ENCODE measurements at regions of chr18 and their contacts with region 1.

Region 1: GRCh38 chr18:45571714-45572113 is 43.6 kb upstream of the SLC14A2 start:
- DNase-seq: no peak
- H3K4me3 ChIP-seq: no peak overlapping the region
- H3K27ac ChIP-seq: no peak overlapping the region
- H3K4me1 ChIP-seq: peaks cover 0 to 16% (median 4%) of the 10 kb centered on the region in 4 experiments; a peak in 4 of 7 replicates
- H3K27me3 ChIP-seq: no peaks in the 10 kb centered on the region; a peak in 1 of 7 replicates
- CTCF ChIP-seq: peak; percentile 28 to 49 (median 35)
- EP300 ChIP-seq: no peak
- POLR2A ChIP-seq: no peak
- RAD21 ChIP-seq: peak; percentile 22 to 43; a peak in 3 of 4 replicates

Region 2: DNA sequence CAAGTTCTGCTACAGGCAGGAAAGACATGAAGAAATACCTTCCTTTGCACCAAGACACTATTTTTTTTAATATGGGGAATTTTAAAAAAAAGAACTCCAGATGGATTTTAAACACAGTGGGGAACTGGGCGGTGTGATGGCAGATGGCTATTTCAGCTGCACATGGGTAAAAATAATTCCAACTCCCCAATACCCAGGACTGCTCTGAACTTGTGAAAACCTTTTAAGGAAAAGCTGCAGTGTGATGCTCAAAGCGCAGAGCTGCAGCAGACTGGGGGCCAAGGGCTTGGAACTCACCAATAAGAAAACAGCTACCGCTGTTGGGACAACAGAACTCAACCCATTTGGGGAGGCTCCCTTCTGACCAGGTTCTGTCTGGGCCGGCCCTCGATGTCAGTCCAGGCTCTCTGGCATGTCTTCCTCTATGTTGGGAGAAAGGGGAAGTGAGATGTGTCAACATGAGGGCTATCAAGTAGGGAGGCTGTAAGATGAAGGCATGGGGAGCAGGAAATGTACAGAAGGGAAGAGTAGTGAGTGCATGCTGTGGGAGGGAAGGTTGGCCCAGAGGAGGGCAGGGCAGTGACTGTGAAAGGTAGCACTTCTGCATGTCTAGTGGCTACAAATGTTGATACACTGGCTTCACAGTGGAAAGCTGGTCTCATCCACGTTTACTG is 20.4 kb before region 1 on chr18:
- CTCF ChIA-PET with region 1: interaction called, 12 read pairs
- POLR2A ChIA-PET with region 1: no interaction called
- DNase-seq: no peak
- H3K4me3 ChIP-seq: no peak overlapping the region
- H3K27ac ChIP-seq: no peak overlapping the region
- H3K4me1 ChIP-seq: no peaks in the 10 kb centered on the region
- H3K27me3 ChIP-seq: no peaks in the 10 kb centered on the region
- CTCF ChIP-seq: no peak
- EP300 ChIP-seq: no peak
- POLR2A ChIP-seq: no peak
- RAD21 ChIP-seq: no peak

Region 3: DNA sequence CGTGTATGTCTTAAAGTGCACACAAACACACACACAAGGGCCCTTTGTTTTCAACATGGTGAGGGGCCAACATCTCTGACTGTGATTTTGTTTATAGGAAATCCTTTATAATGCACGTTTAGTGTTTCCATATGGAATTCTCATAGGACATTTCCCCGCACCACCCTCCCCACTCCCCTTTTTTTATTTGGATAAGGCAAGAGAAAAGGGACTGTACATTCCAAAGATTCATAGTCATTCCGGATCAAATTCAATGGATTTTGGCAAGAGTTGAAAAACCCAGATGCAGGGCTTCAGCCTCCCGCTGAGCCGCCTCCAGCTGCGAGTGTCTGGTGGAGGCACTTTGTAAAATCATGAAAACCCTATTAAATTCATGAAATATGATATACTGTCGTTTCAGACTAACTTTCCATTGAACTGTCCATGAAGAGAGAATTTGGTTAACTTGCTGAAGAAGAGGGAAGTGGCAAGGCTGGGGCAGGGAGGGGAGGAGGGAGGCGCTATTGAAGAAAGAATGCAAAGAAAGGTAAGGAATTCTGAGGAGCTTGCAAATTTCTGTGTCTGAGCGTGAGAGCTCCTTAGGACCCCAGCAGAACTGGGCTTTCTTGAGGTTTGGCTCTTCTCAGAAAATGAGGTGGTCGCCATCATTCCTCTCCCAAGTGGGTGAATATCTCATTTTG is 17.8 kb after region 1 on chr18:
- CTCF ChIA-PET with region 1: interaction called, 14 read pairs
- POLR2A ChIA-PET with region 1: interaction called, 3 read pairs
- DNase-seq: no peak
- H3K4me3 ChIP-seq: peak overlapping the region in 2 of 4 experiments; percentile 11 to 29; a peak in 1 of 8 replicates
- H3K27ac ChIP-seq: no peak overlapping the region
- H3K4me1 ChIP-seq: peaks cover 7 to 20% (median 13%) of the 10 kb centered on the region in 4 experiments; a peak in 6 of 7 replicates
- H3K27me3 ChIP-seq: 0 out of 7 replicates have a peak, but pooled peaks cover 0 to 2% (median 0%) of the 10 kb centered on the region in 4 experiments
- CTCF ChIP-seq: no peak
- EP300 ChIP-seq: no peak
- POLR2A ChIP-seq: no peak
- RAD21 ChIP-seq: no peak

Region 4: DNA sequence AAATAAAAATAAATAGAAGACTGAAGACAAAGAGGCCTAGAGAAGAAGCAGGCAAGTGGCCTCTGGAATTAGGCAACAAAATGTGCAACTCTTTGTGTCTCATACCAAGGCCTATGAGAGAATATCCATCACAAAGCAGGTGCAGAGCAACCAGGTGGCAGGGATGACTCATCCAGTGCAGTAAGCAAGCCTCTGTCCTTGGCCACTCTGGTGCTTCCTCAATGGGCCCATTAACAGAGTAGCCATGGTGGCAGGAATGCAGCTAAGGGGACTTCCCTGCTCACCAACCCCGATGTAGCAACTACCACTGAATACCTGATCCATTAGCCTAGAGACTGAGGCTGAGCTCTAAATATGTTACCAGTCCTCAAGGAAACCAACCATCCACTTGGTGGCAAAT is 406.4 kb after region 1 on chr18:
- CTCF ChIA-PET with region 1: no interaction called
- POLR2A ChIA-PET with region 1: no interaction called
- DNase-seq: peak in 1 of 2 experiments; percentile 49
- H3K4me3 ChIP-seq: no peak overlapping the region
- H3K27ac ChIP-seq: no peak overlapping the region
- H3K4me1 ChIP-seq: peaks cover 0 to 8% (median 3%) of the 10 kb centered on the region in 4 experiments; a peak in 3 of 7 replicates
- H3K27me3 ChIP-seq: no peaks in the 10 kb centered on the region
- CTCF ChIP-seq: no peak
- EP300 ChIP-seq: 0 out of 3 replicates have a peak, but pooled peaks of 1 of the 2 experiments have one; percentile 19
- POLR2A ChIP-seq: no peak; a peak in 1 of 3 replicates
- RAD21 ChIP-seq: no peak